Activated CD8-positive, alpha-beta T cell treated with anti-CD3 and anti-CD28 coated beads for 36 hours (primary cell): ENCODE measurements at regions of chr16 and their contacts with region 1.

Region 1: DNA sequence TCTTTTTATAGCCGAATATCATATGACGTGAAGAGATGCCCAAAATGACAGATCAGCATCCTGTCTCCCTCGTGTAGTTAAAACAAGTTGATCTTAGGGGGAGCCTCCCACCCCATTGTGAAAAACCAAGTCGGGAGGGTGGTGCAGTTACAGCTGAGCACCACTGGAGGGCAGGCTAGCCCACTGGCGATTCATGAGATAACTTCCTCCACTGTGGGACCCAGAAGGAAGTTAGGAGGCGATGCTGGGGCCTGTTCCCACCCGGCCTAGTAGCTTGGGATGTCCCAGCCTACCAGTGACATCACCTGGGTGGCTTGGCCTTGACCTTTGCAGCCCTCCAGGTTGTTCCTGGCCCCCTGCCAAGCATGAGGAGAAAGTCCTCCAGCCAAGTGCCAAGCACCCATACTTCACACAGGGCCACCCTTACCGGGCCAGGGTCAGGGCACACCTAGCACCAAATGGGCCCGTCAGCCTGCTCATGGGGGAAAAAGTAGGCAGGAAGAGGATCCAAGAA is 8.1 kb upstream of the CPNE2 start:
- DNase-seq: peak; percentile 88
- ATAC-seq: peak; percentile 95
- H3K4me3 Mint-ChIP-seq: no peak overlapping the region
- H3K27ac Mint-ChIP-seq: peak overlapping the region; percentile 56
- H3K4me1 Mint-ChIP-seq: peaks cover 10% of the 10 kb centered on the region
- H3K27me3 Mint-ChIP-seq: no peaks in the 10 kb centered on the region
- CTCF ChIP-seq: peak; percentile 97

Region 2: DNA sequence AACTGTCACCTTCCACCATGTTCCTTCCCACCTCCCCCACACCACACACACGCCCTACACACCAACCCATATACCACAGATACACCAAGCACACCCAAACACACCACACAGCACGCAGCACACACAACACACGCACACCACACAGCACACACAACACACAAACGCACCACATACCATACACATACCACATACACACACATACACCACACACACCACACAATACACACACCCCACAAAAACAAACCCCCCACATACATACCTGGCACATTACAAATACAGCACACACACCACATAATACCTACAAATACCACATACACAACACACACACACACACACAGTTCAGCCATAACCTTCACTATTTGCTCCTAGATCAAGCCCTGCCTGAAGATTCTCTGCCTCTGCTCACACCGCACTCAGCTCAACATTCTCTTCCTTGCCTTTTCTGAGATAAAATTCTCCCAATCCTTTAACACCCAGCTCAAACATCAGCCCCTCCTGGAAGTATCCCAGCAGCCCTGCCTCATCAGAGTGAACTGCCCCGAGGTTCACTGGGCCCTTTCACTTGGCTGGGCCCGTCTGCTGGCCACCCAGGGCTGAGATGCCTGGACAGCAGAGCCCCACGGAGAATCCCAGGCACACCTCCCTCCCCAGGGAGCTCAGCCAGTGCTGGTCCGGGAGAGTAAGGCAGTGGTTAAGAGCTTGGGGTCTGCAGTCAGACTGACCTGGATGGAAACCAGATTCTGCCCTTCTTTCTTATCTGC is 23.8 kb before region 1 on chr16:
- CTCF ChIA-PET with region 1: interaction called, 10 read pairs
- POLR2A ChIA-PET with region 1: interaction called, 3 read pairs
- intact Hi-C with region 1: no loop called
- DNase-seq: no peak
- ATAC-seq: peak; percentile 18
- H3K4me3 Mint-ChIP-seq: no peak overlapping the region
- H3K27ac Mint-ChIP-seq: peak overlapping the region; percentile 73
- H3K4me1 Mint-ChIP-seq: peaks cover 31% of the 10 kb centered on the region
- H3K27me3 Mint-ChIP-seq: no peaks in the 10 kb centered on the region
- CTCF ChIP-seq: no peak

Region 3: GRCh38 chr16:57128771-57129389 is 44.6 kb after region 1 on chr16:
- CTCF ChIA-PET with region 1: interaction called, 17 read pairs
- POLR2A ChIA-PET with region 1: interaction called, 3 read pairs
- intact Hi-C with region 1: no loop called
- DNase-seq: peak; percentile 90
- ATAC-seq: peak; percentile 86
- H3K4me3 Mint-ChIP-seq: peak overlapping the region; percentile 72
- H3K27ac Mint-ChIP-seq: peak overlapping the region; percentile 95
- H3K4me1 Mint-ChIP-seq: peaks cover 89% of the 10 kb centered on the region
- H3K27me3 Mint-ChIP-seq: no peaks in the 10 kb centered on the region
- CTCF ChIP-seq: no peak

Region 4: DNA sequence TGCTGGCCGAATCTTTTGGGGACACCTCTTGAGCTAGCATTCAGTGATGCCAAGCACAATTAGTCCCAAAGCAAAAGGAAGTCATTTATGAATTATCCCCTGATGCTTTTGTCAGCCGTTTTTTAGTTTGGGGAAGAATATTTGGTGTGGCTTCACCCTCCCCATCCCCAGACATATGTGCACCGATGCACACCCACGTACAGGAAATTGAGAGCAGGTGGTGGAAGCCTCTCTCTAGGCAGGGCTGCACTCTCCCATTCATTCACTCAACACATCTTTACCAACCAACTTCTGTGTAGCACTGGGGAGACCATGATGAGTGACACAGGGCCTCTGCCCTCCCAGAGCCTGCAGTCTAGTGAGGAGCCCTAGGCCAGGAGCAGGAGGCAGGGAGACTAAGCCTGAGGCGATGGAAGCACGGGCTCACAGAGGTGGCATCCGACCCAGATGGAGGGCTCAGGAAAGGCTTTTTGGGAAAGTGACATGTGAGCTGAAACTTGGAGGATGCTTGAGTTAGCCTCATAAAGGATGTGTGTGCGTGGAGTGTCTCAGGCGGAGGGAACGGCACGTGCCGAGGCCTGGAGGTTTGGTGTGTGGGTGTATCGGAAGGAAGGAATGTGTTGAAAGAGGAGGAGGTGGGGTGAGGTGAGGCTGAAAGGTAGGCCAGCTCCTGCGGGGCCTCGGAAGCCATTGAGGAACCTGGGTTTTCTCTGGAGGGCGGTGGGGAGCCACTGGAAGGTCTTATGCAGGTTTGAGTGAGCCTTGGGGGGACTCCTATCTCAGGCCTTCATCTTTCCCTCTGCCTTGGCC is 57.7 kb after region 1 on chr16:
- CTCF ChIA-PET with region 1: interaction called, 12 read pairs
- POLR2A ChIA-PET with region 1: no interaction called
- intact Hi-C with region 1: no loop called
- DNase-seq: peak; percentile 55
- ATAC-seq: peak; percentile 81
- H3K4me3 Mint-ChIP-seq: peak overlapping the region; percentile 53
- H3K27ac Mint-ChIP-seq: peak overlapping the region; percentile 95
- H3K4me1 Mint-ChIP-seq: peaks cover 30% of the 10 kb centered on the region
- H3K27me3 Mint-ChIP-seq: no peaks in the 10 kb centered on the region
- CTCF ChIP-seq: no peak

Region 5: GRCh38 chr16:57167953-57168352 is 83.6 kb after region 1 on chr16:
- CTCF ChIA-PET with region 1: interaction called, 92 read pairs
- POLR2A ChIA-PET with region 1: interaction called, 4 read pairs
- intact Hi-C with region 1: loop called (anchors 2 kb)
- DNase-seq: peak; percentile 16
- ATAC-seq: peak; percentile 86
- H3K4me3 Mint-ChIP-seq: no peak overlapping the region
- H3K27ac Mint-ChIP-seq: no peak overlapping the region
- H3K4me1 Mint-ChIP-seq: peaks cover 4% of the 10 kb centered on the region
- H3K27me3 Mint-ChIP-seq: no peaks in the 10 kb centered on the region
- CTCF ChIP-seq: peak; percentile 82

Region 6: GRCh38 chr16:57300387-57301125 is 216.2 kb after region 1 on chr16:
- CTCF ChIA-PET with region 1: interaction called, 4 read pairs
- POLR2A ChIA-PET with region 1: no interaction called
- intact Hi-C with region 1: loop called (anchors 10 kb)
- DNase-seq: peak; percentile 99
- ATAC-seq: peak; percentile 91
- H3K4me3 Mint-ChIP-seq: no peak overlapping the region
- H3K27ac Mint-ChIP-seq: no peak overlapping the region
- H3K4me1 Mint-ChIP-seq: peaks cover 14% of the 10 kb centered on the region
- H3K27me3 Mint-ChIP-seq: no peaks in the 10 kb centered on the region
- CTCF ChIP-seq: peak; percentile 96